T-cell (primary cell): ENCODE measurements at regions of chr12 and their contacts with region 1.

Region 1: DNA sequence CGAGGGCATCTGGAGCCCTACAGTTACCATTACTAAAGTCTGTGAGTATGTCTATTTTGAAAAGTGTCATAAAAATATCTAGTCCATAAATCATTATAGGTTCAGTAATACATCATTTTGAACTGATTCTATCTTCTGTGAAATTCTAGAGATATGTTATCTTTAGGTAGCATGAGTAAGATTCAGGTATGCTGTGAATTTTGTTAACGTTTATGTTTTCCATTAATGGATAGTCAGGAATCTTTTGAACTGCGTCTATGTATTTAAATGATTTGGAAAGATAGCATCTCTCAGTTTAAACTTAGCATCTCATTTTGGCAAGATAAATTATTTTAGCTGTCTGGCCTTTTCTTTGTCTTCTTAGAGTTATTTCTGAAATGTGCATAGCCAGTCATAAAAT is 8.3 kb downstream of the ALG10B start:
- DNase-seq: no peak
- ATAC-seq: no peak
- H3K4me3 ChIP-seq: no peak overlapping the region
- H3K4me3 Mint-ChIP-seq: no peak overlapping the region
- H3K27ac ChIP-seq: no peak overlapping the region
- H3K27ac Mint-ChIP-seq: no peak overlapping the region
- H3K4me1 ChIP-seq: no peaks in the 10 kb centered on the region
- H3K4me1 Mint-ChIP-seq: peaks cover 0 to 3% (median 2%) of the 10 kb centered on the region in 3 donors
- H3K27me3 ChIP-seq: no peaks in the 10 kb centered on the region
- H3K27me3 Mint-ChIP-seq: no peaks in the 10 kb centered on the region

Region 2: GRCh38 chr12:38138225-38139221 is 186.4 kb before region 1 on chr12:
- CTCF ChIA-PET with region 1: interaction called in 1 of 2 experiments, 15 read pairs
- POLR2A ChIA-PET with region 1: no interaction called
- DNase-seq: peak in 27 of 35 experiments; percentile 4 to 78 (median 33)
- ATAC-seq: peak; percentile 44 to 64 (median 50)
- H3K4me3 ChIP-seq: peak overlapping the region; percentile 10 to 21
- H3K4me3 Mint-ChIP-seq: peak overlapping the region; percentile 48 to 66 (median 65)
- H3K27ac ChIP-seq: no peak overlapping the region
- H3K27ac Mint-ChIP-seq: peak overlapping the region in 1 of 2 donors; percentile 33
- H3K4me1 ChIP-seq: peaks cover 0 to 10% of the 10 kb centered on the region in 2 experiments
- H3K4me1 Mint-ChIP-seq: peaks cover 9 to 13% (median 10%) of the 10 kb centered on the region in 3 donors
- H3K27me3 ChIP-seq: peaks cover 0 to 24% of the 10 kb centered on the region in 2 experiments
- H3K27me3 Mint-ChIP-seq: peaks cover 6 to 20% of the 10 kb centered on the region in 2 donors

Region 3: GRCh38 chr12:38411426-38411825 is 86.5 kb after region 1 on chr12:
- CTCF ChIA-PET with region 1: no interaction called
- POLR2A ChIA-PET with region 1: no interaction called
- DNase-seq: no peak
- ATAC-seq: no peak
- H3K4me3 ChIP-seq: no peak overlapping the region
- H3K4me3 Mint-ChIP-seq: no peak overlapping the region
- H3K27ac ChIP-seq: no peak overlapping the region
- H3K27ac Mint-ChIP-seq: no peak overlapping the region
- H3K4me1 ChIP-seq: no peaks in the 10 kb centered on the region
- H3K4me1 Mint-ChIP-seq: no peaks in the 10 kb centered on the region
- H3K27me3 ChIP-seq: no peaks in the 10 kb centered on the region
- H3K27me3 Mint-ChIP-seq: no peaks in the 10 kb centered on the region

Region 4: GRCh38 chr12:38490941-38491340 is 166.0 kb after region 1 on chr12:
- CTCF ChIA-PET with region 1: no interaction called
- POLR2A ChIA-PET with region 1: no interaction called
- DNase-seq: no peak
- ATAC-seq: no peak
- H3K4me3 ChIP-seq: no peak overlapping the region
- H3K4me3 Mint-ChIP-seq: no peak overlapping the region
- H3K27ac ChIP-seq: no peak overlapping the region
- H3K27ac Mint-ChIP-seq: no peak overlapping the region
- H3K4me1 ChIP-seq: no peaks in the 10 kb centered on the region
- H3K4me1 Mint-ChIP-seq: no peaks in the 10 kb centered on the region
- H3K27me3 ChIP-seq: no peaks in the 10 kb centered on the region
- H3K27me3 Mint-ChIP-seq: no peaks in the 10 kb centered on the region